MCF 10A (cell line): ENCODE measurements at regions of chr12 and their contacts with region 1.

Region 1: GRCh38 chr12:66860752-66861750 is 182.2 kb upstream of the GRIP1 start:
- DNase-seq: peak; percentile 59
- H3K4me3 Mint-ChIP-seq: no peak overlapping the region
- H3K27ac Mint-ChIP-seq: no peak overlapping the region
- H3K4me1 Mint-ChIP-seq: no peaks in the 10 kb centered on the region
- H3K27me3 Mint-ChIP-seq: peaks cover 19% of the 10 kb centered on the region
- CTCF ChIP-seq: peak; percentile 84

Region 2: DNA sequence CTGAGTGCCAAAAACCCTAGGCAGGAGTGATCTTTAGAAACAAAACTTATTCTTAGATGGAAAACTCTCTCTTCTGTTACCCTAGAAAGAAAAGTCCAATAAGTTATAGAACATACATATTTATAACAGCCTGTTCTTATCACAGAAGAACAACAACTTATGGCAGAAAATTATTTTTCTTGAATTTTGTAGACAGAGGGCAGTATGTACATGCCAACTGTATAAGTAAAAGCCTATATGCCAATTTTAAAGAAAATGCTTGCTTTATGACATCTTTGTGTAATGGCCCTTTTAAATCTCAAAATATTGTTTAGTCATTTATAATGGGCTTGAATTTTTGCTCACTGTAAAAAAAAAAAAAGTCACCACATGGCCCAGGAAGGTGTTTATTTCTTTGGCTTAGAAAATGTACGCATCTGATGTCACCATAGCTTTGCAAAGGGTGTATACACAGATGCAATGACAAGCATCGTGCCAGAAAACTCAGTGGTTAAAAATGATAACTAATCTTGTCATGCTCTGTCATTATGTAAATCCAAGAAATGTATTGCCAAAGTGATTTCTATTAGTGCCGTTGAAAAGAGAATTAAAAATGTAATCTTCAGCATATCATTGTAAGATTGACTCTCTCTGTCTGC is 143.9 kb before region 1 on chr12:
- CTCF ChIA-PET with region 1: interaction called, 5 read pairs
- POLR2A ChIA-PET with region 1: no interaction called
- intact Hi-C with region 1: loop called (anchors 2 kb)
- DNase-seq: no peak
- H3K4me3 Mint-ChIP-seq: no peak overlapping the region
- H3K27ac Mint-ChIP-seq: no peak overlapping the region
- H3K4me1 Mint-ChIP-seq: no peaks in the 10 kb centered on the region
- H3K27me3 Mint-ChIP-seq: peaks cover 42% of the 10 kb centered on the region
- CTCF ChIP-seq: no peak